ENCODE measurements at regions of chr16 and their contacts with region 1.

Region 1: DNA sequence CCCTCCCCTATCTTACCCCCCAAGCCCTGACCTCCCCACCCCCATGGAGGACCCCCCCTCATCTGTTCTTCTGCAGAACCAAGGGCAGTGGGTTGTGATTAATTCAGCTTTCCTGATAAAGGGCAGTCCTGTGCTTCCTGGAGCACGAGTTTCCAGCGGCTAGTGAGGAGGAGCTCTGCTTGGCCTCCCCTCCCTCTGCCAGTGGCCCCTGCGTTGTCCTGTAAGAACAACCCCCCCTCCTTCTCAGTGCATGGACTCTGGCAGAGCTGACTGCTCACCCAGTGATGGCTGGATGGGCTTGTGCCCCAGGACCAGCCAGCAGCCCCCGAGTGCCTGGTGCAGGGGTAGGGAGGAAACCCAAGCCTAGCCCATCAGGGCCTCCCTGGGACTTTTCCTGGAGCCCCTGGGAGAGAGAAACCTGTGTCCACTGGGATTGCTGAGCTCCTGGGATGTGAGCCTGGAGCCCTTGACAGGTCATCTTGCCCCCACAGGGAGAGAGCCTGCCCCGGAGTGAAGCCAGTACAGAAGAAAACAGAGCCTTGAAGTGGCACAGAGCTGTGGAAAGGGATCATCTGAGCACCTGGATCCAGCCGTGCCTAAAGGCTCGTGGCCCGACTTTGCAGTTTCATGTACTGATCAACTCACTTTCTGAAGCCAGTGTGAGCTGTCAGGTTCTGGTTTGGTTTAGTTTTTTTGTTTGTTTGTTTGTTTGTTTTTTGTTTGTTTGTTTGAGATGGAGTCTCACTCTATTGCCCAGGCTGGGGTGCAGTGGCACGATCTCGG is 26.5 kb downstream of the MMP15 start:
- DNase-seq: peak in 2 of 10 donors; percentile 46 to 67

Region 2: GRCh38 chr16:58063377-58064076 is 11.5 kb after region 1 on chr16:
- intact Hi-C with region 1: loop called (anchors 1 kb)
- DNase-seq: peak in 3 of 10 donors; percentile 29 to 51 (median 39)

Measured in posterior cingulate gyrus (tissue), 11 donors.